T-cell (primary cell): ENCODE measurements at regions of chr19 and their contacts with region 1.

Region 1: GRCh38 chr19:53892981-53893325 is 11.0 kb downstream of the PRKCG start:
- DNase-seq: no peak
- ATAC-seq: no peak
- H3K4me3 ChIP-seq: no peak overlapping the region
- H3K4me3 Mint-ChIP-seq: no peak overlapping the region
- H3K27ac ChIP-seq: no peak overlapping the region
- H3K27ac Mint-ChIP-seq: no peak overlapping the region
- H3K4me1 ChIP-seq: peaks cover 0 to 7% of the 10 kb centered on the region in 2 experiments
- H3K4me1 Mint-ChIP-seq: peaks cover 4 to 12% (median 4%) of the 10 kb centered on the region in 3 donors
- H3K27me3 ChIP-seq: peaks cover 2 to 55% of the 10 kb centered on the region in 2 experiments
- H3K27me3 Mint-ChIP-seq: peaks cover 40 to 54% of the 10 kb centered on the region in 2 donors

Region 2: GRCh38 chr19:53867225-53868090 is 25.5 kb before region 1 on chr19 and contains the start of gene MYADM:
- CTCF ChIA-PET with region 1: no interaction called
- POLR2A ChIA-PET with region 1: interaction called, 3 to 12 read pairs
- DNase-seq: peak; percentile 99 to 100 (median 100)
- ATAC-seq: peak; percentile 74 to 82 (median 77)
- H3K4me3 ChIP-seq: peak within 1 kb of the TSS; percentile 89 to 98
- H3K4me3 Mint-ChIP-seq: peak within 1 kb of the TSS; percentile 96 to 99 (median 96)
- H3K27ac ChIP-seq: peak within 1 kb of the TSS; percentile 99
- H3K27ac Mint-ChIP-seq: peak within 1 kb of the TSS; percentile 95 to 97
- H3K4me1 ChIP-seq: peaks cover 19 to 63% of the 10 kb centered on the region in 2 experiments
- H3K4me1 Mint-ChIP-seq: peaks cover 37 to 48% (median 42%) of the 10 kb centered on the region in 3 donors
- H3K27me3 ChIP-seq: peaks cover 0 to 3% of the 10 kb centered on the region in 2 experiments
- H3K27me3 Mint-ChIP-seq: no peaks in the 10 kb centered on the region
- total RNA-seq, gene MYADM: 49.9 to 335 (median 70.9) TPM

Region 3: GRCh38 chr19:53915000-53915399 is 22.0 kb after region 1 on chr19:
- CTCF ChIA-PET with region 1: no interaction called
- POLR2A ChIA-PET with region 1: no interaction called
- DNase-seq: no peak
- ATAC-seq: no peak
- H3K4me3 ChIP-seq: no peak overlapping the region
- H3K4me3 Mint-ChIP-seq: no peak overlapping the region
- H3K27ac ChIP-seq: no peak overlapping the region
- H3K27ac Mint-ChIP-seq: no peak overlapping the region
- H3K4me1 ChIP-seq: no peaks in the 10 kb centered on the region
- H3K4me1 Mint-ChIP-seq: peaks cover under 1 to 8% (median 7%) of the 10 kb centered on the region in 3 donors
- H3K27me3 ChIP-seq: peaks cover 7 to 54% of the 10 kb centered on the region in 2 experiments
- H3K27me3 Mint-ChIP-seq: peaks cover 56% of the 10 kb centered on the region in 2 donors